Activated T-helper 2 cell treated with anti-CD3 and anti-CD28 coated beads, Interferon-gamma antibody, Interleukin-2, Interleukin-4, amounts not matched to agents 10 μg/mL and 5 μg/mL and 100 μg/mL, durations not matched to agents 14 hours and 24 hours and 36 hours (primary cell): ENCODE measurements at regions of chr9 and their contacts with region 1.

Region 1: GRCh38 chr9:21031091-21031807 is at the start of gene HACD4:
- DNase-seq: peak; percentile 69
- H3K4me3 Mint-ChIP-seq: peak within 1 kb of the TSS; percentile 67
- H3K27ac Mint-ChIP-seq: peak within 1 kb of the TSS; percentile 56
- H3K4me1 Mint-ChIP-seq: peaks cover 20% of the 10 kb centered on the region
- H3K27me3 Mint-ChIP-seq: peaks cover 3% of the 10 kb centered on the region
- total RNA-seq, gene HACD4: 2.2 and 2.4 TPM in 2 replicates

Region 2: GRCh38 chr9:20684035-20684872 is 347.0 kb before region 1 on chr9 and contains the start of gene FOCAD:
- intact Hi-C with region 1: loop called (anchors 5 kb)
- DNase-seq: peak; percentile 96
- H3K4me3 Mint-ChIP-seq: peak within 1 kb of the TSS; percentile 87
- H3K27ac Mint-ChIP-seq: peak within 1 kb of the TSS; percentile 82
- H3K4me1 Mint-ChIP-seq: peaks cover 21% of the 10 kb centered on the region
- H3K27me3 Mint-ChIP-seq: no peaks in the 10 kb centered on the region
- total RNA-seq, gene FOCAD: 32.2 and 36.0 TPM in 2 replicates

Region 3: GRCh38 chr9:20941174-20941690 is 90.0 kb before region 1 on chr9:
- intact Hi-C with region 1: no loop called
- DNase-seq: peak; percentile 40
- H3K4me3 Mint-ChIP-seq: no peak overlapping the region
- H3K27ac Mint-ChIP-seq: no peak overlapping the region
- H3K4me1 Mint-ChIP-seq: peaks cover 3% of the 10 kb centered on the region
- H3K27me3 Mint-ChIP-seq: no peaks in the 10 kb centered on the region

Region 4: DNA sequence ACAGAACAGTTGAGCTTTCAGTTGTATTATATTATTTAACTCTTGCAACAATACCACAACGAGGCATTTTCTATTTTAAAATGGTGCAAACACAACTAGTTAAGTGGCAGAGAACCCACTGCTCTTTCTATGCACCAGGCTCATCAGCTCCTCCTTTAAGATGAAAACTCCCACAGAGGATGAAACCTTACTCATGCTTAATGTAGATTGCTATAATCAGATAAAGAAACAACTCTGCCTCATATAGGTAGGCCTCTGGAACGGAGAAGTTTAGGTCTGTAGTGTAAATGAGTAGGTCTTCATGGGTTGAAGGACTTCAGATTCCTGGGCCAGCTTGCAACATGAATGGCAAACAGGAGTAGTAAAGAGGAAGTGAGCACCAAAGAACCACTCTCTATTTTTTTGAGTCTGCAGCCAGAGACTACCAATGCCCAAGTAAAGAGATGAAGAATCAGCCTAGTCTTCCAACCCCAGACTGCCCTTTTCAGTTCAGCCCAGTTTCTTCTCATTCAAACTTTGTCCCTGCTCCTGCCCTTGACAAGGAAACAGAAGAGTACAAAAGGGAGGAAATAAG is 33.7 kb before region 1 on chr9:
- intact Hi-C with region 1: loop called (anchors 2 kb)
- DNase-seq: no peak
- H3K4me3 Mint-ChIP-seq: no peak overlapping the region
- H3K27ac Mint-ChIP-seq: no peak overlapping the region
- H3K4me1 Mint-ChIP-seq: peaks cover 39% of the 10 kb centered on the region
- H3K27me3 Mint-ChIP-seq: no peaks in the 10 kb centered on the region

Region 5: DNA sequence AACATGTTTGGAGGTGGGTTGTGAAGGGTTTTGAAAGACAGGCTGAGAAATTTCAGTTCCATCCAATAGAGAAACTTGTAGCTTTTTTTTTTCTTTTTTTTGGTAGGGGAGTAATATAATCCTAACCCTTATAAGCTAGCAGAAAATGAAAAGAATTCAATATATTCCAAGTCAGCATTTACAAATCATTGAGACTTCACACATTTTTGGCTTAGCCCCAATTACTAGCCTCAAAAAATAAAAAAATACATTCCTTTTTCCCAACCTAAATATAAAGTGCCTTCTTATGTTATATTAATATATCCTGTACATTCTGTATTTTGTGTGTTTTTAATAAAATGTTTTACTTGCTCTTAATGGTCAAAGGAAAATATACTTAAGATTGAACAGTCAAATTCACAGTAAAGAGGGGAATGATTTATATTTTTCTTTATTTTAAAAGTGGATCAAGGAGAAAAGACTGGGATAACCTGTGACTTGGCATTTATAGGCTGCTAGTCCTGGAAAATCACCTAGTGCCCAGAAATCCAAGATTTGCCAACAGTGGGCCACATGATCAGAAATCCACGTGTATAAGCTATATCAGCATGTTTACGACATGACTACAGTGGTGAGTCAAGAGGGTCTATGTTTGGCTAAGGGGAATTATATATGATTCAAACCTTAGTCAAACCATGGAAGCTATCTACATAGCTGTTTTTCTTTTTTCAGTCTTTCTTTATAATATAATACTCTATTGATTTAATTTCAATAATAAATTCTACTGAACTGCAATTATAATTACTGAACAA is 14.4 kb before region 1 on chr9:
- intact Hi-C with region 1: no loop called
- DNase-seq: no peak
- H3K4me3 Mint-ChIP-seq: no peak overlapping the region
- H3K27ac Mint-ChIP-seq: no peak overlapping the region
- H3K4me1 Mint-ChIP-seq: no peaks in the 10 kb centered on the region
- H3K27me3 Mint-ChIP-seq: no peaks in the 10 kb centered on the region

Region 6: GRCh38 chr9:21047281-21047691 is 16.0 kb after region 1 on chr9:
- intact Hi-C with region 1: no loop called
- DNase-seq: no peak
- H3K4me3 Mint-ChIP-seq: no peak overlapping the region
- H3K27ac Mint-ChIP-seq: no peak overlapping the region
- H3K4me1 Mint-ChIP-seq: peaks cover 7% of the 10 kb centered on the region
- H3K27me3 Mint-ChIP-seq: peaks cover 13% of the 10 kb centered on the region

Region 7: GRCh38 chr9:21060919-21061561 is 29.8 kb after region 1 on chr9:
- intact Hi-C with region 1: loop called (anchors 1 kb)
- DNase-seq: peak; percentile 16
- H3K4me3 Mint-ChIP-seq: no peak overlapping the region
- H3K27ac Mint-ChIP-seq: peak overlapping the region; percentile 5
- H3K4me1 Mint-ChIP-seq: peaks cover 22% of the 10 kb centered on the region
- H3K27me3 Mint-ChIP-seq: peaks cover 2% of the 10 kb centered on the region

Region 8: GRCh38 chr9:21096172-21096900 is 65.1 kb after region 1 on chr9:
- intact Hi-C with region 1: loop called (anchors 2 kb)
- DNase-seq: peak; percentile 34
- H3K4me3 Mint-ChIP-seq: peak overlapping the region; percentile 51
- H3K27ac Mint-ChIP-seq: peak overlapping the region; percentile 8
- H3K4me1 Mint-ChIP-seq: peaks cover 33% of the 10 kb centered on the region
- H3K27me3 Mint-ChIP-seq: no peaks in the 10 kb centered on the region

Region 9: GRCh38 chr9:22354699-22355384 is 1323.6 kb after region 1 on chr9:
- intact Hi-C with region 1: no loop called
- DNase-seq: no peak
- H3K4me3 Mint-ChIP-seq: no peak overlapping the region
- H3K27ac Mint-ChIP-seq: no peak overlapping the region
- H3K4me1 Mint-ChIP-seq: no peaks in the 10 kb centered on the region
- H3K27me3 Mint-ChIP-seq: no peaks in the 10 kb centered on the region